ENCODE measurements at regions of chr21 and their contacts with region 1.

Region 1: DNA sequence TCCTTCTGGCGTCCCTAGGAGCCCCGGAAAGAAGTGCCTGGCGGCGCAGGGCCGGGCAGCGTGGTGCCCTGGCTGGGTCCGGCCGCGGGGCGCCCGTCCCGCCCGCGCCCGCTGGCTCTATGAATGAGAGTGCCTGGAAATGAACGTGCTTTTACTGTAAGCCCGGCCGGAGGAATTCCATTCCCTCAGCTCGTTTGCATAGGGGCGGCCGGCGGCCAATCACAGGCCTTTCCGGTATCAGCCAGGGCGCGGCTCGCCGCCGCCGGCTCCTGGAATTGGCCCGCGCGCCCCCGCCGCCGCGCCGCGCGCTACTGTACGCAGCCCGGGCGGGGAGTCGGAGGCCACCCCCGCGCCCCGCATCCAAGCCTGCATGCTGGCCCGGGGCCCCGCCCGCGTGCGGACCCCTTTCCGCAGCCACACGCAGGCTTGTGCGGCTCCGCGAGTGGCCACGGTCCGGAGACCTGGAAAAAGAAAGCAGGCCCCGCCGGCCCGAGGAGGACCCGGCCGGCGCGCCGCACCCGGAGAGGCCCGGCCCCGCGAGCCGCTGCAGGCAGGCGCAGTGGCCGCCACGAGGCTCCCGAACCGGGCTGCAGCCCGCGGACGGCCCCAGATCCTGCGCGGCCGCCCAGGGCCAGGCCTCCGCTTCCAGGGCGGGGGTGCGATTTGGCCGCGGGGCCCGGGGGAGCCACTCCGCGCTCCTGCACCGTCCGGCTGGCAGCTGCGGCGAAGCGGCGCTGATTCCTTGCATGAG is 160.4 kb downstream of the RUNX1 start:
- DNase-seq: peak; percentile 82
- ATAC-seq: peak; percentile 45
- H3K4me3 Mint-ChIP-seq: peak overlapping the region; percentile 91
- H3K27ac Mint-ChIP-seq: peak overlapping the region; percentile 99
- H3K4me1 Mint-ChIP-seq: peaks cover 53% of the 10 kb centered on the region
- H3K27me3 Mint-ChIP-seq: peaks cover 1% of the 10 kb centered on the region
- CTCF ChIP-seq: no peak

Region 2: DNA sequence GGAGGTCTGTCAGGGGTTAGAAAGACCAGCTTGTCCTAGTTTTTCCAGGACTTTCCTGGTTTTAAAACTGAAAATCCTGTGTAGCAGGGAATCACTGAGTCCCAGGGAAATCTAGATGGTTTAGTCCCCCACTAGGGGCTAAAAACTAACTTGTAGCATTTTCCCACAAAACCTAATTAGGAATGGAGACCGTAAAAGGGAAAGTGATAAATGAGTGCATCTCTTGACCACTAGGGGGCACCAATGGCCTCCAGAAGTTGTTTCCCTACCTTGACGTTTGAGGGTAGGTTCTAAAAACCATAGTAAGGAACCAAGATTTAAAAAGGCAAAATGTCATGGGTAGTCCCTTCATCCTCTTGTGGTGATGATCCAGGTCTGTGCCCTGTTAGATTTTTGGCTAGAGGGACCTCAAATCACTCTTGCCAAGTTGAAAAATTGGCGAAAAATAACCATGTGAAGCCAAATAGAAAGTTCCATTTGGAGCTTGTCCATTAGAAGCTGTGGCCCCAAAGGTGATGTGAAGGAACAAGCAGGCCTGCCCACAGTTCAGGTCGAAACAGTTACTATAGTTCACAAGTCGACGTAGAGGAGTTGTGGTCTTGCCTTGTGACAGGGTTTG is 195.4 kb before region 1 on chr21:
- CTCF ChIA-PET with region 1: interaction called, 4 read pairs
- POLR2A ChIA-PET with region 1: no interaction called
- intact Hi-C with region 1: loop called (anchors 1 kb)
- DNase-seq: no peak
- ATAC-seq: no peak
- H3K4me3 Mint-ChIP-seq: no peak overlapping the region
- H3K27ac Mint-ChIP-seq: no peak overlapping the region
- H3K4me1 Mint-ChIP-seq: no peaks in the 10 kb centered on the region
- H3K27me3 Mint-ChIP-seq: peaks cover 13% of the 10 kb centered on the region
- CTCF ChIP-seq: peak; percentile 72

Region 3: GRCh38 chr21:34857874-34858273 is 30.9 kb before region 1 on chr21:
- CTCF ChIA-PET with region 1: no interaction called
- POLR2A ChIA-PET with region 1: interaction called, 218 read pairs
- intact Hi-C with region 1: no loop called
- DNase-seq: no peak
- ATAC-seq: no peak
- H3K4me3 Mint-ChIP-seq: no peak overlapping the region
- H3K27ac Mint-ChIP-seq: peak overlapping the region; percentile 36
- H3K4me1 Mint-ChIP-seq: peaks cover 43% of the 10 kb centered on the region
- H3K27me3 Mint-ChIP-seq: no peaks in the 10 kb centered on the region
- CTCF ChIP-seq: no peak

Region 4: DNA sequence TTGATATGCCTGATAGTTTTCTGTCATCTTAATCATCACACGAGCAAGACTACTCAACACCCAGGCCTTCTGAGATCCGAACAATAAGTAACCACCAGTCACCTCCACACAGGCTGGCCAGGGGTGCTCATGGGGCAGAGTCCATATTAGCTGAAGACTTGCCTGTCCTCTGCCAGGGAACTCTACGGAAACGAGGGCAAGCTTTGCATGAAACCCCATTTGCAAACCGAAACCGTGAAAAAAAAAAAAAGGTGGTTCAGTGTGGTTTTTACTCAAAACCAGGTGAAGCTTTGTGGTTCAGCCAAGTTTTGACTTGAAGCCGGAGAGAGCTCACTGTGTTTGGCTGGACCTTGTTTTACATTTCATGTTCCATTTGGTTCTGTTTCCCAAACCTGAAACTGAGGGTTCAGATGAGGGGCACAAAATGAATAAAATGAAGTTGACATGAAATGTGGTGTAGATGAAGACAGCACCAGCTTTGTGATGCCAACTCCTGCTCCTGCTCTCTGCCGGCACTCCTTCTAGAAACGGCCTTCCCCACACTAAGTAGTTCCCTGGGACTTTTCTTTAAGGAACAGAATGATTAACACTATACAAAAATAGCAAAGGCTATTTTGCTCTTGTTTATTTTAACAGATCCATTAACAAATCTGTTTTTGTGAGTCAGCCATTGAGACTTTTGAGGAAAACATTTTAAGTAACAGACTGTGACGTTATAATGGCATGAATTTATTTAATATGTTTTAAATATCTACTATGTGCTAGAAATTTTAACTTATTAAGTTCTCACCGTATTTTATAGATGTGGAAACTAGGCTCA is 85.6 kb after region 1 on chr21:
- CTCF ChIA-PET with region 1: interaction called, 6 read pairs
- POLR2A ChIA-PET with region 1: interaction called, 23 read pairs
- intact Hi-C with region 1: no loop called
- DNase-seq: no peak
- ATAC-seq: peak; percentile 90
- H3K4me3 Mint-ChIP-seq: peak overlapping the region; percentile 53
- H3K27ac Mint-ChIP-seq: peak overlapping the region; percentile 74
- H3K4me1 Mint-ChIP-seq: peaks cover 46% of the 10 kb centered on the region
- H3K27me3 Mint-ChIP-seq: no peaks in the 10 kb centered on the region
- CTCF ChIP-seq: no peak

Region 5: DNA sequence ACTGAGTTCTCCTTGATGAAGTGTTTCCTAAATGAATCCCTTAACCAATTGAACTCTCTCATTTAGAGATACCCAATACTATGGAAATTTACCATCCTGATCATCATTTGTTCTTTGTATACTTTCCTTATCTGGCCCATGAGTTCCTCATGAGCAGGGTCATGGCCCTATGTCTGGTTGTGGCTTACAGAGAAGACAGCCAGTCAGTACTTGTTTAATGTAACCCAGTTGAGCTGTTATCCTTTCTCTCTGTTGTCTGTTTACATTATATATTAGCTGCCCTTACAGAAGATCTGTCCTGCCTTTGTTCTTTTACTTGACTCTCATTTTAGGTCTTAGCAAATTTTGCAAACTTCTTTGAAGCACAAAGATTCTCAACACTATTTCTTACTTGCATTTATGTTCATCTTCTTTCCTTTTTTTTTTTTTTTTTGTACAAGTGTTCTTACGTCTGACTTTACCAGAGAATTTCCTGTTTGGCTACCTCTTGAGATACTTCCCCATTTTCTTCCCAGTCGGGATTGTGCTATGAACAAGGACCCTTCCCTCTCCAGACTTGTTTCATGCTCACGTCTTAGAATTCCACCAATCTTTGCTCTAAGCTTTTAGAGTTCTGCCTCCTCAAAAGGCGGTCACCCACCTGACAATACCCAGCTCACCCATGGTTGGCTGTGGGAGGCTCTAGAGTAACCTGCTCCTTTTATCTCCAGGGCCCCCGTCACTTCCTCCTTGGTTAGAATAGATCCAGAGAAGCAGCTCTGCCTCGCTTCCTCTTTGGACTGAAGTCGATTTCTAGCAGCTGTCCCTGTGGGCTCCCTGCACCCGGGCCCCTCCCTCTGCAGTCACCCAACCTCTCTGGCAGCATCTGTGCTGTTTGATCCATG is 214.0 kb after region 1 on chr21:
- CTCF ChIA-PET with region 1: no interaction called
- POLR2A ChIA-PET with region 1: no interaction called
- intact Hi-C with region 1: loop called (anchors 1 kb)
- DNase-seq: peak; percentile 24
- ATAC-seq: peak; percentile 94
- H3K4me3 Mint-ChIP-seq: no peak overlapping the region
- H3K27ac Mint-ChIP-seq: no peak overlapping the region
- H3K4me1 Mint-ChIP-seq: no peaks in the 10 kb centered on the region
- H3K27me3 Mint-ChIP-seq: no peaks in the 10 kb centered on the region
- CTCF ChIP-seq: no peak

Region 6: GRCh38 chr21:35528116-35529042 is 639.6 kb after region 1 on chr21:
- CTCF ChIA-PET with region 1: no interaction called
- POLR2A ChIA-PET with region 1: interaction called, 3 read pairs
- intact Hi-C with region 1: loop called (anchors 5 kb)
- DNase-seq: peak; percentile 40
- ATAC-seq: peak; percentile 70
- H3K4me3 Mint-ChIP-seq: peak overlapping the region; percentile 85
- H3K27ac Mint-ChIP-seq: peak overlapping the region; percentile 87
- H3K4me1 Mint-ChIP-seq: peaks cover 51% of the 10 kb centered on the region
- H3K27me3 Mint-ChIP-seq: no peaks in the 10 kb centered on the region
- CTCF ChIP-seq: no peak

Region 7: GRCh38 chr21:36060159-36060921 is 1171.6 kb after region 1 on chr21 and contains the start of gene SETD4:
- CTCF ChIA-PET with region 1: no interaction called
- POLR2A ChIA-PET with region 1: interaction called, 4 read pairs
- intact Hi-C with region 1: loop called (anchors 10 kb)
- DNase-seq: peak; percentile 96
- ATAC-seq: peak; percentile 89
- H3K4me3 Mint-ChIP-seq: peak within 1 kb of the TSS; percentile 95
- H3K27ac Mint-ChIP-seq: peak within 1 kb of the TSS; percentile 96
- H3K4me1 Mint-ChIP-seq: peaks cover 20% of the 10 kb centered on the region
- H3K27me3 Mint-ChIP-seq: no peaks in the 10 kb centered on the region
- CTCF ChIP-seq: no peak
- total RNA-seq, gene SETD4: 31.6 and 40.4 TPM in 2 replicates